ENCODE measurements at regions of chr11 and their contacts with region 1.

Region 1: DNA sequence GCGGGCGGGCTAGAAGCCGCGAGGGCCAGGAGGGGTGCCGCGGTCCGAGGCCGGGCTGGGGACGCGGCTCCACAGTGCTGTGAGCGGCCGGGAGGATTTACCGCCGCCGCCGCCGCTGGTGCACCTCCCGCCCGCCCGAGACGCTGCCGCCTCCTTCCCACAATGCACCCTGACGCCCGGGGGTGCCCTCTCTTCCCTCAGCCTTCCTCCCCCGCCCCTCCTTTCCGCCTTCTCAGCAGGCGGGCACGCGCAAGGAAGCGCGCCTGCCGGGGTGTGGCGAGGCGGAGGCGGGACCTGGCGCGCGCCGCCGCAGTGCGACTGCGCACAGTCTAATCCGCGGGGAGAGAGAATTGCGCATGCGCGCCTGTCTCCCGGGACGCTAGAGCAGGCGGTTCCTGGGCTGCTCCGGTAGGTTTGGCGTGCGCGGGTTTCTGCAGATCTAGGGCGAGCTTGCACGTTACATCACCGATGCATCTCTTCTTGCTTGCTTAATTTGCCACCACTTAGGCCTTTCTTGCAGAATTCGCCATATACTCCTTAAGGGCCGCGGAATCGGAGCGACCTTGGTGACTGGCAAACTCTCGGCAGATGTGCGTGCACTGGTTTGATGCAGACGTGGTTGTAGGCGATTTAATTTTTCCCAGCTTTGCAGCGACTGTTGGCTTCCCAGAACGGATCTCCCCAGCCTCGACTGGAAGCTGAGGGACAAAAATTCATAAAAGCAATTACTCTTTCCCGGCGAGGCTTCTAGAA is at the starts of genes GVQW3 and THAP12:
- DNase-seq: peak; percentile 98
- ATAC-seq: peak; percentile 90
- H3K4me3 Mint-ChIP-seq: peak within 1 kb of the TSS; percentile 82
- H3K27ac Mint-ChIP-seq: peak within 1 kb of the TSS; percentile 95
- H3K4me1 Mint-ChIP-seq: peaks cover 56% of the 10 kb centered on the region
- H3K27me3 Mint-ChIP-seq: no peaks in the 10 kb centered on the region
- total RNA-seq, gene GVQW3: 3.2 to 3.7 TPM
- total RNA-seq, gene THAP12: 53.6 to 60.9 TPM

Region 2: GRCh38 chr11:75907906-75908527 is 473.1 kb before region 1 on chr11:
- CTCF ChIA-PET with region 1: no interaction called
- POLR2A ChIA-PET with region 1: no interaction called
- intact Hi-C with region 1: loop called in 1 of 2 experiments (anchors 2 kb)
- DNase-seq: no peak
- ATAC-seq: no peak
- H3K4me3 Mint-ChIP-seq: no peak overlapping the region
- H3K27ac Mint-ChIP-seq: no peak overlapping the region
- H3K4me1 Mint-ChIP-seq: peaks cover 27% of the 10 kb centered on the region
- H3K27me3 Mint-ChIP-seq: no peaks in the 10 kb centered on the region

Region 3: DNA sequence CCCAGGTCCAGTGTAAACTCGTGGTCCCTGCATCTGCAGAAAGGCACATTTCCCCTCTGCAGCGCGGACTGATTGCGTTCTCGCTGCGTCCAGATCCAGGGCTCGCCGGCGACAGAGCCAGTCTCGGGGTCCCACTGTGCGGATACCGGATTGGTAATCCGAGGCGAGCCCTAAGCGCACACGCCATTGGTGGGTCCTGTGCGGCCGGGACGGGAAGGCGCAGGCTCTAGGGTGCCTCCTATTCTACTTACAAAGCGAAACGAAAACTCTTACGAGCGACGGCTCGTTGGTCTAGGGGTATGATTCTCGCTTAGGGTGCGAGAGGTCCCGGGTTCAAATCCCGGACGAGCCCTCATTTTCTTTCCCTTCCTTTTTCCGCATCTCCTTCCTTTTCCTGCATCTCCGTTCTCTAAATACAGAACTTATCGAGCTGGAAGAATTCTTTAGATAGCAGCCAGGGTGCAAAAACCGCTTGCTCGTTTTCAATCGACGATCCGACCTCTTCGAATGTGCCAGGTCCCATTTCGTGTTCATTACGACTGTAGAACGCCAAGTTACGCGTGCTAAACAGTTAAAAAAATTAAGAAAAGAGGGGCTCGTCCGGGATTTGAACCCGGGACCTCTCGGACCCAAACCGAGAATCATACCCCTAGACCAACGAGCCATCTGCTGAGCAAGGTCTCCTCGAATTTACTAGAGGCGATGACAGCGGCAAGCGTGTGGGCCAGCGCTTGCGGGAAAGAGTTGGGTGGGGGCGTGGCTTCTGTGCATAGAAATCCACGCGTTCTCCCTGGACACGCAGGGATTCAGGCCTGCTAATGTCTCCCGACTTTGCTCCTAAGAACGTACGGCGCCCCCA is 145.7 kb before region 1 on chr11:
- CTCF ChIA-PET with region 1: no interaction called
- POLR2A ChIA-PET with region 1: no interaction called
- intact Hi-C with region 1: loop called (anchors 1 to 2 kb)
- DNase-seq: peak; percentile 94
- ATAC-seq: peak; percentile 91
- H3K4me3 Mint-ChIP-seq: peak overlapping the region; percentile 83
- H3K27ac Mint-ChIP-seq: peak overlapping the region; percentile 94
- H3K4me1 Mint-ChIP-seq: peaks cover 49% of the 10 kb centered on the region
- H3K27me3 Mint-ChIP-seq: peaks cover 3% of the 10 kb centered on the region

Region 4: GRCh38 chr11:77637345-77638165 is 1256.4 kb after region 1 on chr11 and contains the start of gene CLNS1A:
- CTCF ChIA-PET with region 1: no interaction called
- POLR2A ChIA-PET with region 1: no interaction called
- intact Hi-C with region 1: loop called in 1 of 2 experiments (anchors 10 kb)
- DNase-seq: peak; percentile 91
- ATAC-seq: peak; percentile 98
- H3K4me3 Mint-ChIP-seq: peak within 1 kb of the TSS; percentile 85
- H3K27ac Mint-ChIP-seq: peak within 1 kb of the TSS; percentile 94
- H3K4me1 Mint-ChIP-seq: peaks cover 40% of the 10 kb centered on the region
- H3K27me3 Mint-ChIP-seq: no peaks in the 10 kb centered on the region
- total RNA-seq, gene CLNS1A: 185 to 212 TPM

Measured in activated CD4-positive, alpha-beta T cell treated with anti-CD3 and anti-CD28 coated beads for 36 hours (primary cell).